PC-9 (cell line): ENCODE measurements at regions of chr15 and their contacts with region 1.

Region 1: GRCh38 chr15:69058830-69059556 is 44.5 kb downstream of the NOX5 start:
- DNase-seq: peak; percentile 71 to 77
- H3K4me3 ChIP-seq: no peak overlapping the region
- H3K27ac ChIP-seq: no peak overlapping the region
- H3K4me1 ChIP-seq: peaks cover 3% of the 10 kb centered on the region
- H3K27me3 ChIP-seq: no peaks in the 10 kb centered on the region
- CTCF ChIP-seq: peak; percentile 86

Region 2: DNA sequence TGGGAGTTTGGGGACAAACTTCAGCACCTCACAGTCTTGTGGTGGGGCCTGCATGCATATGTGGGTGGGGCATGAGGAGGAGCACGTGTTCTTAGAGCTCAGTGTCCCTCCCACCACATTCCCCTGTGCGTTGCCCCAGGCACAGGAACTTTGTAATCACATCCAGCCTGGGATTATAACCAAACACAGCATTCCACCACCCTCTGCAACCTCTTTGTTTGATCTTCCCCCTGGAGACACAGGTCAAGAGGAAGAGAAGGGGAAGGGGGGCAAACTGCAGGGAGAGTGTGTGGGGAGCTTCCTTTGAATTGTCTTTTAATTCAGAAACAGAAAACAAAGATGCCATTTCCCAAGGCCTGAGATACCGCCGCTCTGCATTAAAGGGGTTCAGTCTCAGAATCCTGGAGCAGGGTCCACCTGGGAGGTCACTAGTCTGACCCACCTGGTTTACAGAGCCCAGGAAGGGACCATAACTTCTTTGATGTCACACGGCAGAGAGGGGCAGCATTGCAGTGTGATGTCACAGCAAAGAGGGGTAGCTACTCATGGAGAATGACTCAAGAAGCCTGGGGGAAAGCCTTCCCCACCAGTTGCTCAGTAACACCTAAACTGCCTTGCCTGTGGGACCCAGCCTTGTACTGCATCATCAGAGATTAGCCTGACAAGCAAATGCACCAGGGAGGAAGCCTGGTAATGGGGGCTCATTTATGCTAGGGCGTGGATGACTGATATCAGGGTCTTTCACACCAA is 1112.9 kb before region 1 on chr15:
- CTCF ChIA-PET with region 1: no interaction called
- POLR2A ChIA-PET with region 1: no interaction called
- intact Hi-C with region 1: no loop called
- DNase-seq: peak; percentile 72 to 77
- H3K4me3 ChIP-seq: no peak overlapping the region
- H3K27ac ChIP-seq: peak overlapping the region; percentile 54
- H3K4me1 ChIP-seq: peaks cover 28% of the 10 kb centered on the region
- H3K27me3 ChIP-seq: no peaks in the 10 kb centered on the region
- CTCF ChIP-seq: no peak

Region 3: DNA sequence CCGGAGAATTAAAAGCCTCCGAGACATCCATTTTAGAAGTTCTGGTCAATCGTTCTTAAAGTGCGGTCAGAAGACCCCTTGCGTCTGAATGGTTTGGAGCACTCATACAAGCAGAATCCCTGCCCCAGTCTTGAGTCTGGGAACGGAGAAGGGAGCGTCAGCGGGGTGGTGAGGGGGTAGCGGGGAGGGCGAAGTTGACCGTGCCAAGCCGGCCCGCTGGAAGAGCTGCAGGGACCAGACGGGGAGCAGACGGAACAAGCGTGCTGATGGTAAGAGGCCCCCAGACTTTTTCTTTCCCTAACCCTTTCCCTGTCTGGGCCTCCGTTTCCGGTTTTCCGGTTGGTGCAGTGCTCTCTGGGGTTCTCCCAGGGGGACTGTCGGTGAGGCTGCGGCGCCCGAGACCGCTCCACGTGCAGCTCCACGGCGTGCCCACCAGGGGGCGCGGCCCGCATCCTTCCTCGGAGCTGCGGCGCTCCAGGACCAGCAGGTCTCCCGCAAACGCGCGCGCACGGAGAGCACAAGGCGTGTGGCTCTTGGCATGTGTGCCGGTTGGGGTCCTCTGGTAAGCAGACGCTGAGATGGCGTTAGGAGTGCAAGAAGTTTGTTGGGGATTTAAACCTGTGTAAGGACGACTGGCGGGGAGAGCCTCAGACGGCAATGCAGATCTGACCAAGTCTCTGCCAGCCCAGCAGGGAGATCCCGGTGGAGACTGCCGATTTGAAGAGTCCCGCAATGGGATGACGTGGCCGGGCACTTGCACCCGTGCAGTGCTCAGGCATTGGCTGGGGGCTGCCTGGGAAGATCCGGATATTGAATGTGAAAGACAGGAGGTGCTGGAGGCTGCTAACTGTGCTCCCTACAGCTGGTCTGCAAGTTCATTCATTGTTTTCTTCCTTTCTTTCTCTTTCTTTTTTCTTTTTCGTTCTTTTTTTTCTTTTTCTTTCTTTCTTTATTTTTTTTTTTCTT is 499.4 kb before region 1 on chr15:
- CTCF ChIA-PET with region 1: no interaction called
- POLR2A ChIA-PET with region 1: no interaction called
- intact Hi-C with region 1: loop called (anchors 10 kb)
- DNase-seq: peak in 1 of 2 experiments; percentile 80
- H3K4me3 ChIP-seq: peak overlapping the region; percentile 47; the same call in 1 of the 2 replicates
- H3K27ac ChIP-seq: no peak overlapping the region
- H3K4me1 ChIP-seq: no peaks in the 10 kb centered on the region
- H3K27me3 ChIP-seq: no peaks in the 10 kb centered on the region
- CTCF ChIP-seq: peak; percentile 90

Region 4: GRCh38 chr15:68924866-68925560 is 134.0 kb before region 1 on chr15:
- CTCF ChIA-PET with region 1: no interaction called
- POLR2A ChIA-PET with region 1: no interaction called
- intact Hi-C with region 1: loop called (anchors 1 kb)
- DNase-seq: peak; percentile 48 to 77
- H3K4me3 ChIP-seq: no peak overlapping the region
- H3K27ac ChIP-seq: no peak overlapping the region
- H3K4me1 ChIP-seq: no peaks in the 10 kb centered on the region
- H3K27me3 ChIP-seq: no peaks in the 10 kb centered on the region
- CTCF ChIP-seq: peak; percentile 86

Region 5: DNA sequence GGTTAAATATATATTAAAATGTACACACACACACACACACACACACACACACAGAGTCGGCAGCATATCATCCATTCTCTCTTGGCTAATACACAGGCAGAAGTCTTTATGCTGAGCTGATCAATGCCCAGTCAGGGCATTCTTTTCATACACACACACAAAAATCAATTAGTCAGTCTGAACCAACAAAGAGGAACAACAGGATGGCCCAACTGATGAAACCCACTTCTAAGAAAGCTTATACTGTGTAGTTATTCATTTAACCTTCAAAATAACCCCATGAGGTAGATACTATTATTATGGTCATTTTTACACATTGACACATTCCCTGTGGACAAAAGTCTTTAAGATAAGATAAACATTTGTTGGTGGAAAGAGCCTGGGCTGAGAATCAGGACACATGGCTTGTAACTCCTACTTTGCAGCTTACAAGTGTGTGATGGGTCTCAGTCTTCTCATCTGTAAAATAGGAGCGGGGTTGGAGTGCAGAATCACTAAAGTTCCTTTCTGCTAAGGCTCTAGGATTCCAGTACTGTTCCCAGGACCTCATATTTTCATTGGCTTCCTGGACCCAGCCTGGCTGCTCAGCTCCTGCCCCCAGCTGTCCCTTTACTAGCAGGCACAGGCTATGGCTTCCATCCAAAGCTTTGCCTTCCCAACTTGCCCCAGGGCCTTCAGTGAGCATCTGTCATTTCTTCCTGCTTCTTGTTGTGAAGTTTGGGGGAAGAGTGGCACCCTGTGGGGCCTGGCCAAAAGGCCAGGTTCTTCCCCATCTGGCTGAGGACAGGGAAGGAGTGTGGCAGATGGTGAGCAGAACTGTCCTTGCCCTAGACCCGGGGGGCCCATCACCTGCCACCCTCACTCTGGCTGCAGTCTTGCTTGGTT is 74.2 kb after region 1 on chr15:
- CTCF ChIA-PET with region 1: interaction called, 4 read pairs
- POLR2A ChIA-PET with region 1: no interaction called
- intact Hi-C with region 1: loop called (anchors 1 kb)
- DNase-seq: peak; percentile 52 to 66
- H3K4me3 ChIP-seq: no peak overlapping the region
- H3K27ac ChIP-seq: no peak overlapping the region
- H3K4me1 ChIP-seq: peaks cover 22% of the 10 kb centered on the region
- H3K27me3 ChIP-seq: no peaks in the 10 kb centered on the region
- CTCF ChIP-seq: 0 out of 2 replicates have a peak, but pooled peaks have one; percentile 27

Region 6: GRCh38 chr15:69265347-69265955 is 206.5 kb after region 1 on chr15:
- CTCF ChIA-PET with region 1: no interaction called
- POLR2A ChIA-PET with region 1: no interaction called
- intact Hi-C with region 1: loop called (anchors 1 kb)
- DNase-seq: no peak
- H3K4me3 ChIP-seq: no peak overlapping the region
- H3K27ac ChIP-seq: no peak overlapping the region
- H3K4me1 ChIP-seq: no peaks in the 10 kb centered on the region
- H3K27me3 ChIP-seq: no peaks in the 10 kb centered on the region
- CTCF ChIP-seq: peak; percentile 66

Region 7: DNA sequence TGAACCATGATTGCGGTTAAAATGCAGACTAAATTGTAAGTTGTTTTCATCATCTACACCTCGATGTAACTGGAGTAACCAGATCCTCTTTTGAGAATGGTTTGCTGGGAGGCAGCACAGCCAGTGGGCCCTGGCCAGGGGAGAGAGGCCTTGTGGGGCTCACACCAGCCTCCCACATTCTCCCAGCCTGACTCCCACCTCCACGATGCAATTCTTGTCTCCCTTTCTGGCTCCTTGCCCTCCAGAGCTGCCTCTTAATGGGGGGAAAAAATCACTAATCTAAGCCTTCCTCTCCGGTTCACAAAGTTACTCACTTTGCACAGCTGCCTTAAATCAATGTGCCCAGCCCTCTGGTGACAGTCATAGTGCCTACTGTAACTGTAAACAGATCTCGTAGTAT is 221.8 kb after region 1 on chr15:
- CTCF ChIA-PET with region 1: no interaction called
- POLR2A ChIA-PET with region 1: no interaction called
- intact Hi-C with region 1: no loop called
- DNase-seq: no peak
- H3K4me3 ChIP-seq: no peak overlapping the region
- H3K27ac ChIP-seq: no peak overlapping the region
- H3K4me1 ChIP-seq: no peaks in the 10 kb centered on the region
- H3K27me3 ChIP-seq: no peaks in the 10 kb centered on the region
- CTCF ChIP-seq: no peak

Region 8: GRCh38 chr15:69362041-69362440 is 303.0 kb after region 1 on chr15:
- CTCF ChIA-PET with region 1: no interaction called
- POLR2A ChIA-PET with region 1: no interaction called
- intact Hi-C with region 1: no loop called
- DNase-seq: no peak
- H3K4me3 ChIP-seq: no peak overlapping the region
- H3K27ac ChIP-seq: no peak overlapping the region
- H3K4me1 ChIP-seq: no peaks in the 10 kb centered on the region
- H3K27me3 ChIP-seq: no peaks in the 10 kb centered on the region
- CTCF ChIP-seq: no peak

Region 9: GRCh38 chr15:69413822-69414700 is 355.1 kb after region 1 on chr15 and contains the start of gene KIF23:
- CTCF ChIA-PET with region 1: no interaction called
- POLR2A ChIA-PET with region 1: no interaction called
- intact Hi-C with region 1: loop called (anchors 1 kb)
- DNase-seq: peak; percentile 89 to 92
- H3K4me3 ChIP-seq: peak within 1 kb of the TSS; percentile 86
- H3K27ac ChIP-seq: peak within 1 kb of the TSS; percentile 63
- H3K4me1 ChIP-seq: peaks cover 39% of the 10 kb centered on the region
- H3K27me3 ChIP-seq: no peaks in the 10 kb centered on the region
- CTCF ChIP-seq: no peak
- total RNA-seq, gene KIF23: 78.7 and 100 TPM in 2 replicates